CD4-positive, alpha-beta memory T cell (primary cell): ENCODE measurements at regions of chr1 and their contacts with region 1.

Region 1: GRCh38 chr1:92960395-92961130 is 699 bp downstream of the DIPK1A start:
- DNase-seq: peak; percentile 75 to 88 (median 80)
- H3K4me3 ChIP-seq: peak overlapping the region; percentile 48 to 76
- H3K4me3 Mint-ChIP-seq: peak overlapping the region; percentile 89 to 98 (median 92)
- H3K27ac ChIP-seq: peak overlapping the region; percentile 98
- H3K27ac Mint-ChIP-seq: peak overlapping the region; percentile 97 to 99 (median 99)
- H3K4me1 ChIP-seq: peaks cover 76% of the 10 kb centered on the region
- H3K4me1 Mint-ChIP-seq: peaks cover 35 to 45% (median 40%) of the 10 kb centered on the region in 4 donors
- H3K27me3 ChIP-seq: no peaks in the 10 kb centered on the region
- H3K27me3 Mint-ChIP-seq: no peaks in the 10 kb centered on the region

Region 2: DNA sequence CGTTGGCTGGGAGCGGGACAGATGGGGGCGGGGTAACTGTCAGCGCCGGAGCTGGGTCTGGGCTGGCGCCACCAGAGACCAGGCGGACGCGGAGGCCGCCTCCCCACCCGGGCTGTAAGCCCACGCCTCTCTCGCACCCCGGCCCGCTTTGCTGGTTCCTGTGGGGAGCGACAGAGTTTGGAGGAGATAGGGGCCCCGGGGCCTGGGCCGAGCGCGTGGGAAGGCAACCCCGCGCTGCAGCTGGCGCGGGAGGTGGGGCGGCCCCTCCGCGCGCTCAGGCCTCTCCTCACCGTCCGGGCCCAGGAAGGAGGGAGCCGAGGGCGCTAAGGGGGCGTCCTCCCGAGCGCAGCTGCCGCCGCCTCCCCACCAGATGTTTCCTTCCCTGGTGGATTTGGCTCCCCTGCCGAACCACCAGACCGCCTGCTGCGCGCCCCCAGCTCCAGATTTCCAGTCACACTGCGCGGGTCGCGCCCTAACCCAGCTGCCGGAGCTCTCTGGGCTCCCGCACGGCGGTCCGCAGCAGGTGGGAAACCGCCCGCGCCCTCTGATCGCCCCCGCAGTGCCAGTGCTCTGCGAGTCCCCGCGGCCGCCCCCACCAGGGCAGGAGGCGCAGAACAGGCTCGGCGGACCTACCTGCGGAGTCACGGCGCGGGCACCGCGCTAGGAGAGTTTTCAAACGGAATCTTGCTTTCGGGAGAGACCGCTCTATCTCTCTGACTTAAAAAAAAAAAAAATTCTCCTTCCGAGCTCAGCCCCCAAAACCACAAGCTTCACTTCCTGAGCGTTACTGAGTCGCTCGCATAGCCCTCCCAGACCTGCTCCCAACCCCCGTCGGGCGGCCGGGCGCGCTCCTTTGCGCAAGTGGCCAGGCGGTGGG is 474.9 kb before region 1 on chr1:
- CTCF ChIA-PET with region 1: no interaction called
- POLR2A ChIA-PET with region 1: interaction called, 4 read pairs
- intact Hi-C with region 1: loop called (anchors 10 kb)
- DNase-seq: peak; percentile 73 to 85 (median 77)
- H3K4me3 ChIP-seq: peak overlapping the region; percentile 84 to 92
- H3K4me3 Mint-ChIP-seq: peak overlapping the region; percentile 89 to 97 (median 94)
- H3K27ac ChIP-seq: peak overlapping the region; percentile 52
- H3K27ac Mint-ChIP-seq: peak overlapping the region; percentile 88 to 94 (median 91)
- H3K4me1 ChIP-seq: peaks cover 30% of the 10 kb centered on the region
- H3K4me1 Mint-ChIP-seq: peaks cover 14 to 69% (median 31%) of the 10 kb centered on the region in 4 donors
- H3K27me3 ChIP-seq: no peaks in the 10 kb centered on the region
- H3K27me3 Mint-ChIP-seq: no peaks in the 10 kb centered on the region

Region 3: DNA sequence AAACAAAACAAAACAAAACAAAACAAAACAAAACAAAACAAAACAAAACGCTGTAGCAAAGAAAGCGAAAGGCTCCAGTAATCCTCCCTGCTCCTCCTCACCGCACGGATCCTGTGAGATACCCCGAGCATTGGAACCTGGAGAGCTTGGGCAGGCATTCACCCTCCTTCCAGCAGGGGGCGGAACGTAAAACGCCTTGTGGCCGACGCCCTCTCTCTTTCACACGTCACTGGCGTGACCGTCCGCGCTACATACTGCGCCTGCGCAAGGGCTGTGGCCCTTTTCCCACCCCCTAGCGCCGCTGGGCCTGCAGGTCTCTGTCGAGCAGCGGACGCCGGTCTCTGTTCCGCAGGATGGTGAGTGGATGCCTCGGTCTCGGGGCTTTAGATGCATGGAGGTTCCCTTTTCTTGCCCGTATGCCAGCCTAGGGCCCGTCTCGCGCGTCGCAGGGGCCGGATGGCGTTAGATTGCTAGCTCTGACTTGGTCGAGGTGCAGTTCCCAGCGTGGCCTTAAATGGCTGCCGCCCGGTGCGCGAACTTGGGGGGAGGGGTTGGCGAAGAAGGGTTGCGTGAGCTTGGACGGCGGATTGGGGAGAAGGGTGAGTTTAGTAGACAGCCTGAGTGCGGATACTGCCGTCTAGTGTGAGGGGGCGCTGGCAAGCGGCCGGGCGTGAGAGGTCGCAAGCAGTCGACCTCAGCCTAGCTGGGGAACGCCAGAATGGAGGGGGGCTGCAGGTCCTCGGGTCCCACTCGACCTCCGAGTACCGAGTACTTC is 128.6 kb before region 1 on chr1 and contains the start of gene RPL5:
- CTCF ChIA-PET with region 1: interaction called, 15 read pairs
- POLR2A ChIA-PET with region 1: interaction called, 60 read pairs
- intact Hi-C with region 1: loop called (anchors 1 kb)
- DNase-seq: peak; percentile 97 to 100 (median 98)
- H3K4me3 ChIP-seq: peak within 1 kb of the TSS; percentile 54 to 100
- H3K4me3 Mint-ChIP-seq: peak within 1 kb of the TSS; percentile 98 to 100 (median 100)
- H3K27ac ChIP-seq: peak within 1 kb of the TSS; percentile 93
- H3K27ac Mint-ChIP-seq: peak within 1 kb of the TSS; percentile 98 to 100 (median 99)
- H3K4me1 ChIP-seq: peaks cover 46% of the 10 kb centered on the region
- H3K4me1 Mint-ChIP-seq: peaks cover 35 to 55% (median 45%) of the 10 kb centered on the region in 4 donors
- H3K27me3 ChIP-seq: no peaks in the 10 kb centered on the region
- H3K27me3 Mint-ChIP-seq: peaks cover 0 to 1% of the 10 kb centered on the region in 2 donors
- total RNA-seq, gene RPL5: 1,501 to 1,588 TPM

Region 4: GRCh38 chr1:92882819-92883218 is 77.7 kb before region 1 on chr1:
- CTCF ChIA-PET with region 1: interaction called, 10 read pairs
- POLR2A ChIA-PET with region 1: interaction called, 47 read pairs
- intact Hi-C with region 1: no loop called
- DNase-seq: peak; percentile 27 to 61 (median 37)
- H3K4me3 ChIP-seq: no peak overlapping the region
- H3K4me3 Mint-ChIP-seq: peak overlapping the region in 7 of 8 donors; percentile 0 to 66 (median 52)
- H3K27ac ChIP-seq: peak overlapping the region; percentile 12
- H3K27ac Mint-ChIP-seq: peak overlapping the region; percentile 72 to 94 (median 86)
- H3K4me1 ChIP-seq: peaks cover 51% of the 10 kb centered on the region
- H3K4me1 Mint-ChIP-seq: peaks cover 30 to 49% (median 36%) of the 10 kb centered on the region in 4 donors
- H3K27me3 ChIP-seq: no peaks in the 10 kb centered on the region
- H3K27me3 Mint-ChIP-seq: no peaks in the 10 kb centered on the region

Region 5: DNA sequence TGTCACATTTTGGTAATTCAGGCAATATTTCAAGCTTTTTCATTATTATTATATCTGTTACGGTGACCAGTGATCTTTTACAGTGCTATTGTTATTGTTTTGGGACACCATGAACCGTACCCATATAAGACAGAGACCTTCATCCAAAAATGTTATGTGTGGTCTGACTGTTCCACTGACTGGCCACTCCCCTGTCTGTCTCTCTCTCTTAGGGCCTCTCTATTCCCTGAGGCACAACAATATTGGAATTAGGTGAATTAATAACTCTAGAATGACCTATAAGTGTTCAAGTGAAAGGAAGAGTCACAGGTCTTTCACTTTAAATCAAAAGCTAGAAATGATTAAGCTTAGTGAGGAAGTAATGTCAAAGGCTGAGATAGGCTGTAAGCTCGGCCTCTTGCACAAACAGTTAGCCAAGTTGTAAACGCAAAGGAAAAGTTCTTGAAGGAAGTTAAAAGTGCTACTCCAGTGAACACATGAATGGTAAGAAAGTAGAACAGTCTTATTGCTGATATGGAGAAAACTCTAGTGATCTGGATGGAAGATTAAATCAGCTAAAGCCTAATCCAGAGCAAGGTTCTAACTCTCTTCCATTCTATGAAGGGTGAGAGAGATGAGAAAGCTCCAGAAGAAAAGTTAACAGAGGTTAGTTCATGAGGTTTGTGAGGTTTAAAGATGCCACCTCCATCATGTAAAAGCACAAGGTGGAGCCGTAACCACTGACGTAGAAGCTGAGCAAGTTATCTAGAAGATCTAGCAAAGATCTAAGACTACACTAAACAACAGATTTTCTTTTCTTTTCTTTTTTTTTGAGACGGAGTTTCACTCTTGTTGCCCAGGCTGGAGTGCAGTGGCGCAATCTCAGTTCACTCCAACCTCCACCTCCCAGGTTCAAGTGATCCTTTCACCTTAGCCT is 20.4 kb after region 1 on chr1:
- CTCF ChIA-PET with region 1: interaction called, 81 read pairs
- POLR2A ChIA-PET with region 1: interaction called, 244 read pairs
- intact Hi-C with region 1: loop called (anchors 1 kb)
- DNase-seq: peak; percentile 81 to 91 (median 87)
- H3K4me3 ChIP-seq: no peak overlapping the region
- H3K4me3 Mint-ChIP-seq: peak overlapping the region; percentile 32 to 86 (median 72)
- H3K27ac ChIP-seq: peak overlapping the region; percentile 77
- H3K27ac Mint-ChIP-seq: peak overlapping the region; percentile 88 to 99 (median 99)
- H3K4me1 ChIP-seq: peaks cover 58% of the 10 kb centered on the region
- H3K4me1 Mint-ChIP-seq: peaks cover 23 to 43% (median 35%) of the 10 kb centered on the region in 4 donors
- H3K27me3 ChIP-seq: no peaks in the 10 kb centered on the region
- H3K27me3 Mint-ChIP-seq: no peaks in the 10 kb centered on the region

Region 6: DNA sequence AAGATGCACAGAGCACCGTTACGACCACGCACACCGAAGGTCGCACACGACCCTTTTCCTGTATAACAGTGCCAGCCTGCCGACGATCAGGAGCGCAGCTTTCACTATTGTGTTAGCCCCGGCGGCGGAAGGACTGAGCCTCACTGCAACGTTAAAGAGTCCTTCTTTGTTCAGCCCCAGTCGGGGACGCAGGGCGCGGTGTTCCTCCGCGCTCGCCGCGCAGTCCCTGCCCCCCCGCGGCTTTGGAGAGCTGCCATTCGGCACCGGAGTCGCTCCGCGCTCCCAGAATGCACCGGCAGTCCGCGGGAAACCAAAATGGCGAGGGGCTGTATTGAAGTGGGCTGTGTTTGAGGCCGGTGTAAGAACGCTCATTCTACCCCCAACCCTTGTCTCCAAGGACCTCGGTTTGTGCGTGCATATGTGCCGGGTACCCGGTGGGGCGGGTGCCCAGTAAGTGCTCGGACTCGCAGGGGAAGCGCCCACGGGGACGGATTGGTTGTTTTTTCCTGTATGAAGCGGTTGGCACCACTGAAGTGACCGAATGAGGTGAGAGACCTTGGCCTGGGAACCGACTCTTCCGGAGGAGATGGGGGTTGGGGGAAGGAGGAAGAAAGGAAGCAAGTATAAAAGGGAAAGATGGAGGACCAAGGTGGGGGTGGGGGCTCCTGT is 118.6 kb after region 1 on chr1 and contains the start of gene MTF2:
- CTCF ChIA-PET with region 1: no interaction called
- POLR2A ChIA-PET with region 1: interaction called, 39 read pairs
- intact Hi-C with region 1: loop called (anchors 2 kb)
- DNase-seq: peak; percentile 89 to 91 (median 90)
- H3K4me3 ChIP-seq: peak within 1 kb of the TSS; percentile 97
- H3K4me3 Mint-ChIP-seq: peak within 1 kb of the TSS; percentile 92 to 99 (median 98)
- H3K27ac ChIP-seq: peak within 1 kb of the TSS; percentile 96
- H3K27ac Mint-ChIP-seq: peak within 1 kb of the TSS; percentile 94 to 100 (median 95)
- H3K4me1 ChIP-seq: peaks cover 46% of the 10 kb centered on the region
- H3K4me1 Mint-ChIP-seq: peaks cover 21 to 58% (median 37%) of the 10 kb centered on the region in 4 donors
- H3K27me3 ChIP-seq: no peaks in the 10 kb centered on the region
- H3K27me3 Mint-ChIP-seq: no peaks in the 10 kb centered on the region
- total RNA-seq, gene MTF2: 46.5 to 47.4 TPM

Region 7: DNA sequence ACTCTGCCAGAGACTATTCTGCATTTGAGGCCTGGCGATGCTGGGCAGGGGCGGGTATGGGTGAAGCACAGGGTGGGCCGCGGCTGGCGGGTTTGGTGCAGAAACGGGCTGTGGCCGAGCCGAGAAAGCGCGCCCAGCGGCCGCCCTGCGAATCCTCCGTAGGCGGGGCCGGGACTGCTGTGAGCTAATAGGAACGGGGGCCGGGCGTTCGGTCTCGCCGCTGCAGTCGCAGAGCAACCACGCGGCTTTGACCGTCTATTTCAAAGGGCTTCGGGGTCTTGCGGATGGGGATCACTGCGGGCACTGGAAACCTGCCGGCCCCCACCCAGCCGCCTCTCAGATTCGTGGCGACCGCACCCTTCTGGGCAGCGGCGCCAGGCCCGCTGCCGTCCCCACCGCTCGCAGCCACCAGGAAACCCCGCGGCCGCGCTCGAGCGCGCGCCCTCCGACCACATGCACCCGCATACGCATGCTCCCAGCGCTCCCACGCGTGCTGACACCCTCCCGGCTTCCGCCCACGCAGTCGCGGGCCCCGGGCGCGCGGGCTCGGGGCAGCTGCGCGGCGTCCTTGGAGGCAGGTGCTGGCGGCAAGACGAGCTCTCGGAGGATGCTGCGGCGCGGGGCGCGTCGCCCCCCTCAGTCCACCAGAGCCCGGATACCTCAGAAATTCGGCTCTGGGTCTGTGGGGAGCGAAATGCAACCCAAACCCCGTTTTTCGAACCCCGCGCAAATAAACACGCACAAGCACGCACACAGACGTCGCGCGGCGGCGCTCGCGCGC is 885.8 kb after region 1 on chr1:
- CTCF ChIA-PET with region 1: no interaction called
- POLR2A ChIA-PET with region 1: interaction called, 7 read pairs
- intact Hi-C with region 1: loop called (anchors 1 kb)
- DNase-seq: peak; percentile 85 to 91 (median 88)
- H3K4me3 ChIP-seq: peak overlapping the region; percentile 58 to 92
- H3K4me3 Mint-ChIP-seq: peak overlapping the region; percentile 87 to 97 (median 90)
- H3K27ac ChIP-seq: peak overlapping the region; percentile 81
- H3K27ac Mint-ChIP-seq: peak overlapping the region; percentile 89 to 100 (median 95)
- H3K4me1 ChIP-seq: peaks cover 31% of the 10 kb centered on the region
- H3K4me1 Mint-ChIP-seq: peaks cover 17 to 44% (median 25%) of the 10 kb centered on the region in 4 donors
- H3K27me3 ChIP-seq: no peaks in the 10 kb centered on the region
- H3K27me3 Mint-ChIP-seq: peaks cover 1 to 6% of the 10 kb centered on the region in 2 donors